A549 (cell line): ENCODE measurements at regions of chr1 and their contacts with region 1.

Region 1: GRCh38 chr1:15168479-15168878 is 14.9 kb downstream of the TMEM51 start:
- DNase-seq: peak in 1 of 2 experiments; percentile 86
- ATAC-seq: peak; percentile 94 to 97
- H3K4me3 ChIP-seq: no peak overlapping the region
- H3K27ac ChIP-seq: peak overlapping the region; percentile 80 to 87
- H3K4me1 ChIP-seq: peaks cover 73% of the 10 kb centered on the region
- CTCF ChIP-seq: peak; percentile 19; the same call in 1 of the 3 replicates
- EP300 ChIP-seq: peak in 1 of 2 experiments; percentile 32; a peak in 1 of 5 replicates
- POLR2A ChIP-seq: no peak
- RAD21 ChIP-seq: peak in 1 of 2 experiments; percentile 15; a peak in 2 of 5 replicates

Region 2: DNA sequence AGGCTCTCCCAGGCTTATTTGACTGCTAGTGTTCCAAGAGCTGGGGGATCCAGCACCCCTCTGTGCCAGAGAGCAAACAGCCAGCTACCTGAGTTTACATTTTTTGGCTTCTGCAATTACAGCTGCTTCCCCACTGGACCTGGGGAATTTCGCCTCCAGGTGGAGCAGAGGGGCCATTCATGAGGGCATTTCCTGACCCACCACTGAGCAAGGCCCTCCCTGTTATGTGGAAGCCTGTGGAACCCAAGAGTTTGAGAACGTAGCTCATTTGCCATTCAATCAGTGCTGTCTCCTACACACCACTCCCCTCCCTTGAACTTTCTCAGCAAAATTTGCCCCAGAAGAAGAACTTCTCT is 57.6 kb before region 1 on chr1:
- CTCF ChIA-PET with region 1: no interaction called
- POLR2A ChIA-PET with region 1: no interaction called
- DNase-seq: no peak
- ATAC-seq: peak in 1 of 2 experiments; percentile 27; a peak in 2 of 6 replicates
- H3K4me3 ChIP-seq: no peak overlapping the region
- H3K27ac ChIP-seq: no peak overlapping the region
- H3K4me1 ChIP-seq: no peaks in the 10 kb centered on the region
- CTCF ChIP-seq: no peak
- EP300 ChIP-seq: no peak
- POLR2A ChIP-seq: no peak
- RAD21 ChIP-seq: no peak

Region 3: GRCh38 chr1:15178571-15179484 is 10.3 kb after region 1 on chr1:
- CTCF ChIA-PET with region 1: interaction called, 7 read pairs
- POLR2A ChIA-PET with region 1: interaction called, 18 read pairs
- DNase-seq: peak in 1 of 2 experiments; percentile 79
- ATAC-seq: peak; percentile 87 to 91
- H3K4me3 ChIP-seq: no peak overlapping the region
- H3K27ac ChIP-seq: peak overlapping the region; percentile 82 to 88
- H3K4me1 ChIP-seq: peaks cover 74% of the 10 kb centered on the region
- CTCF ChIP-seq: no peak
- EP300 ChIP-seq: peak; percentile 59 to 70; a peak in 2 of 5 replicates
- POLR2A ChIP-seq: no peak
- RAD21 ChIP-seq: no peak

Region 4: DNA sequence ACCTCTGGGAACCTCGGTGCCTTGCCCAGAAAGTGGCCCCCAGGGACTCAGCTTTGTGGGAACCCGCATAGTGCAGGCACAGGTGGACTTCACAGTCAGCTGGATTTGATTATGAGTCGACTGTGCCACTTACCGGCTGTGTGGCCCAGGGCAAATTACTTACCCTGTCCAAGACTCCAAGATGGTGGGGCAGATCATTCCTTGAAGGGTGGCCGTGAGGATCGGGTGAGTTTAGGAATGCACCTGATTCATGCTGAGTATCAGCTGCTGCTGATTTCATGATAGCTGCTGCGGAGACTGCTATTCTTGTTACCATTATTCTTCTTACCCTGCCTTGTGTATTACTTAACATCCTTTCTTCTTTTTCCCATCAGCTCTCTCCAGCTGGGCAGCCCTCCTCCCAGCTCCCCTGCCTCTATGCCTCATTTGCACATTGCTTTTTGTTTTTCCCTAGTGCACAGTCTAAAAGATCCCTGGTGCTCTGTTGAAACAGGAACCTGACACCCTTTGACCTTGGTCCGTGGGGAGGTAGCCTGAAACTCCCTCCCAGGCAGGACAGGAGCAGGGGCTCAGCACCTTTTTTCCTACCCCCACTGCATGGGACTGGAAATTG is 38.0 kb after region 1 on chr1:
- CTCF ChIA-PET with region 1: interaction called, 16 read pairs
- POLR2A ChIA-PET with region 1: no interaction called
- DNase-seq: no peak
- ATAC-seq: peak in 1 of 2 experiments; percentile 30; a peak in 3 of 6 replicates
- H3K4me3 ChIP-seq: no peak overlapping the region
- H3K27ac ChIP-seq: peak overlapping the region; percentile 24 to 72; a peak in 4 of 6 replicates
- H3K4me1 ChIP-seq: peaks cover 43% of the 10 kb centered on the region
- CTCF ChIP-seq: no peak
- EP300 ChIP-seq: no peak
- POLR2A ChIP-seq: no peak
- RAD21 ChIP-seq: no peak

Region 5: DNA sequence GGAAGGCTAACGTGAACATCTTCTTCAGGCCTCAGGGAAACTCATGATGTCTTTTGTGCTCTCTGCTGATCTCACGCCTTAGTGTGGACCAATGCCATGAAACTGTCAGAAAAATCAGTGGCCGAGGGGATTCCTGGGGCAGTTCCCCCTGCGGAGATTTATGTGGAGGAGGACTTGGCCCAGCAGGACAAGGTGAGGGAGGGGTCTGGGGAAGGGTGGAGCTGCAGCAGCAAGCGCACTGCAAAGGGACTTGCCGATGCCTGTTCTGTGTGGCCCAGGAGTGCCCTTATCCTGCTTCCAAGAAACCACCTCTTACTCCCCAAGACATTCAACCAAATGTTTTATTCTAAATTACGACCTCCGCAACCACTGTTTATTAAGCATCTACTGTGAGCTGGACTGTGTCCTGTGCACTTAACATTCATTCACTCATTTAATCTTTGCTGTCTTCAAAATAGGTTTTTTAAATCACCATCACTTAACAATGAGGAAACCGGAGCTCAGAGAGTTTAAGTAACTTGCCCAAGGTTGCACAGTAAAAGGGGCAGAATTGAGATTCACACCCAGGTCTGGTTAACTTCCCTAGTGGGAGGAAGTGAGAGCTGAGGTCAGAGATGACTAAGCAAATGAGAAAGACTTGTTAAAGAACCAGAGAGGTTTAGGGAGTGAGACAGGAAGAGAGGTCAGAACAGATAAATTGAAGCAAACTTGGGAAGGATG is 128.3 kb after region 1 on chr1:
- CTCF ChIA-PET with region 1: no interaction called
- POLR2A ChIA-PET with region 1: no interaction called
- DNase-seq: peak in 1 of 2 experiments; percentile 29
- ATAC-seq: no peak
- H3K4me3 ChIP-seq: no peak overlapping the region
- H3K27ac ChIP-seq: peak overlapping the region in 1 of 2 experiments; percentile 24; a peak in 1 of 6 replicates
- H3K4me1 ChIP-seq: 0 out of 3 replicates have a peak, but pooled peaks cover 3% of the 10 kb centered on the region
- CTCF ChIP-seq: no peak
- EP300 ChIP-seq: no peak
- POLR2A ChIP-seq: no peak
- RAD21 ChIP-seq: no peak